ENCODE measurements at regions of chr19 and their contacts with region 1.

Region 1: GRCh38 chr19:4638828-4639530 is at the start of gene TNFAIP8L1:
- DNase-seq: peak; percentile 97 to 100 (median 99)
- ATAC-seq: peak; percentile 94
- H3K4me3 ChIP-seq: peak within 1 kb of the TSS; percentile 83 to 94
- H3K4me3 Mint-ChIP-seq: peak within 1 kb of the TSS; percentile 94
- H3K27ac ChIP-seq: peak within 1 kb of the TSS; percentile 68 to 96
- H3K27ac Mint-ChIP-seq: peak within 1 kb of the TSS; percentile 95
- H3K4me1 ChIP-seq: peaks cover 45% of the 10 kb centered on the region
- H3K4me1 Mint-ChIP-seq: peaks cover 34% of the 10 kb centered on the region
- H3K27me3 ChIP-seq: no peaks in the 10 kb centered on the region
- H3K27me3 Mint-ChIP-seq: no peaks in the 10 kb centered on the region
- CTCF ChIP-seq: no peak
- total RNA-seq, gene TNFAIP8L1: 4.3 to 4.5 TPM

Region 2: DNA sequence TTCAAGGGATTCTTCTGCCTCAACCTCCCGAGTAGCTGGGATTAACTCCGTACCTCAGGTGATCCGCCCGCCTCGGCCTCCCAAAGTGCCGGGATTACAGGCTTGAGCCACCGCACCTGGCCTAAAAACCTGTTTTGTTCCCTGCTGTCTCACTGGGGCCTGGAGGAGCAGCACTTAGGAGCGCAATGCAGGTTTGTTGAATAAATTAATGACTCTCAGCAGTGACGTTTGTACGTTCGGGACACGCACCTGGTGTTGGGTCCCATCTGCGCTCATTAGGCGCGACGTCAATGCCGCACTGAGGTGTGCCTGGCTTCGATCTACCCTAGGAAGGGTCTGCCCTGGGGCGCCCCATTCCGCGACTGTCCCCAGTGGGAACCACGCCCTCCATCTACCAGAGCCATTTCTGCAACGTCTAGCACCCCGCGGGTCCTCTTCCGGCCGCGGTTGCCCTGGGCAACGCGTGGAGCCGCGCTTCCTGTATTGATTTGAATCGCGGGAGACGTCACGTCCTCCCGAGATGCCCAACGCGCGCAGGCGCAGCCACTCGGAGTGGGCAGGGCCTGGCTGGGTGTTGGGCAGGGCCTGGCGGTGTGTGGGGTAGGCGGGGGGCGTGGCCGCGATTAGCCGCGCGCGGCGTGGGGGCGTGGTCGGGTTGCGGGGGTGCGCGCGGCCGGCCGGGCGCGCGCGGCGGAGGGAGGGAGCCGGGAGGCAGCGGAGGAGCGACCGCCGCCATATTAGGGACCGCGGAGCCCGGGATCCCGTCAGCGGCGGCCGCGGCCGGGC is 1133.2 kb before region 1 on chr19 and contains the start of gene FZR1:
- CTCF ChIA-PET with region 1: no interaction called
- POLR2A ChIA-PET with region 1: no interaction called
- intact Hi-C with region 1: loop called in 1 of 2 experiments (anchors 10 kb)
- DNase-seq: peak; percentile 99 to 100 (median 100)
- ATAC-seq: peak; percentile 85
- H3K4me3 ChIP-seq: peak within 1 kb of the TSS; percentile 76 to 83
- H3K4me3 Mint-ChIP-seq: peak within 1 kb of the TSS; percentile 85
- H3K27ac ChIP-seq: peak within 1 kb of the TSS; percentile 97
- H3K27ac Mint-ChIP-seq: peak within 1 kb of the TSS; percentile 97
- H3K4me1 ChIP-seq: peaks cover 36% of the 10 kb centered on the region
- H3K4me1 Mint-ChIP-seq: peaks cover 48% of the 10 kb centered on the region
- H3K27me3 ChIP-seq: no peaks in the 10 kb centered on the region
- H3K27me3 Mint-ChIP-seq: no peaks in the 10 kb centered on the region
- CTCF ChIP-seq: no peak
- total RNA-seq, gene FZR1: 130 to 142 TPM

Region 3: GRCh38 chr19:4471403-4472173 is 167.4 kb before region 1 on chr19:
- CTCF ChIA-PET with region 1: no interaction called
- POLR2A ChIA-PET with region 1: no interaction called
- intact Hi-C with region 1: loop called (anchors 1 to 5 kb)
- DNase-seq: peak; percentile 94 to 100 (median 97)
- ATAC-seq: peak; percentile 85
- H3K4me3 ChIP-seq: peak overlapping the region; percentile 55 to 63
- H3K4me3 Mint-ChIP-seq: no peak overlapping the region
- H3K27ac ChIP-seq: peak overlapping the region; percentile 70 to 72
- H3K27ac Mint-ChIP-seq: no peak overlapping the region
- H3K4me1 ChIP-seq: peaks cover 20% of the 10 kb centered on the region
- H3K4me1 Mint-ChIP-seq: peaks cover 22% of the 10 kb centered on the region
- H3K27me3 ChIP-seq: no peaks in the 10 kb centered on the region
- H3K27me3 Mint-ChIP-seq: no peaks in the 10 kb centered on the region
- CTCF ChIP-seq: no peak

Region 4: GRCh38 chr19:4531562-4532165 is 107.3 kb before region 1 on chr19:
- CTCF ChIA-PET with region 1: no interaction called
- POLR2A ChIA-PET with region 1: no interaction called
- intact Hi-C with region 1: no loop called
- DNase-seq: no peak
- ATAC-seq: no peak
- H3K4me3 ChIP-seq: no peak overlapping the region
- H3K4me3 Mint-ChIP-seq: no peak overlapping the region
- H3K27ac ChIP-seq: no peak overlapping the region
- H3K27ac Mint-ChIP-seq: no peak overlapping the region
- H3K4me1 ChIP-seq: peaks cover 11% of the 10 kb centered on the region
- H3K4me1 Mint-ChIP-seq: peaks cover 7% of the 10 kb centered on the region
- H3K27me3 ChIP-seq: no peaks in the 10 kb centered on the region
- H3K27me3 Mint-ChIP-seq: peaks cover 6% of the 10 kb centered on the region
- CTCF ChIP-seq: no peak

Region 5: GRCh38 chr19:4567584-4568071 is 71.4 kb before region 1 on chr19:
- CTCF ChIA-PET with region 1: interaction called, 75 read pairs
- POLR2A ChIA-PET with region 1: no interaction called
- intact Hi-C with region 1: loop called (anchors 1 to 2 kb)
- DNase-seq: peak; percentile 43 to 73 (median 61)
- ATAC-seq: peak; percentile 77
- H3K4me3 ChIP-seq: no peak overlapping the region
- H3K4me3 Mint-ChIP-seq: no peak overlapping the region
- H3K27ac ChIP-seq: no peak overlapping the region
- H3K27ac Mint-ChIP-seq: no peak overlapping the region
- H3K4me1 ChIP-seq: no peaks in the 10 kb centered on the region
- H3K4me1 Mint-ChIP-seq: no peaks in the 10 kb centered on the region
- H3K27me3 ChIP-seq: no peaks in the 10 kb centered on the region
- H3K27me3 Mint-ChIP-seq: peaks cover 7% of the 10 kb centered on the region
- CTCF ChIP-seq: peak; percentile 62

Region 6: GRCh38 chr19:4597975-4598671 is 40.9 kb before region 1 on chr19:
- CTCF ChIA-PET with region 1: interaction called, 5 read pairs
- POLR2A ChIA-PET with region 1: no interaction called
- intact Hi-C with region 1: loop called in 1 of 2 experiments (anchors 5 kb)
- DNase-seq: peak in 8 of 9 experiments; percentile 20 to 78 (median 46)
- ATAC-seq: peak; percentile 85
- H3K4me3 ChIP-seq: no peak overlapping the region
- H3K4me3 Mint-ChIP-seq: peak overlapping the region; percentile 70
- H3K27ac ChIP-seq: no peak overlapping the region
- H3K27ac Mint-ChIP-seq: no peak overlapping the region
- H3K4me1 ChIP-seq: peaks cover 12% of the 10 kb centered on the region
- H3K4me1 Mint-ChIP-seq: peaks cover 13% of the 10 kb centered on the region
- H3K27me3 ChIP-seq: peaks cover 19 to 38% of the 10 kb centered on the region in 2 experiments
- H3K27me3 Mint-ChIP-seq: peaks cover 41% of the 10 kb centered on the region
- CTCF ChIP-seq: no peak

Region 7: GRCh38 chr19:4877753-4878490 is 238.9 kb after region 1 on chr19:
- CTCF ChIA-PET with region 1: no interaction called
- POLR2A ChIA-PET with region 1: no interaction called
- intact Hi-C with region 1: no loop called
- DNase-seq: no peak
- ATAC-seq: no peak
- H3K4me3 ChIP-seq: peak overlapping the region in 1 of 2 experiments; percentile 11
- H3K4me3 Mint-ChIP-seq: no peak overlapping the region
- H3K27ac ChIP-seq: no peak overlapping the region
- H3K27ac Mint-ChIP-seq: no peak overlapping the region
- H3K4me1 ChIP-seq: peaks cover 17% of the 10 kb centered on the region
- H3K4me1 Mint-ChIP-seq: peaks cover 16% of the 10 kb centered on the region
- H3K27me3 ChIP-seq: no peaks in the 10 kb centered on the region
- H3K27me3 Mint-ChIP-seq: no peaks in the 10 kb centered on the region
- CTCF ChIP-seq: no peak

Region 8: DNA sequence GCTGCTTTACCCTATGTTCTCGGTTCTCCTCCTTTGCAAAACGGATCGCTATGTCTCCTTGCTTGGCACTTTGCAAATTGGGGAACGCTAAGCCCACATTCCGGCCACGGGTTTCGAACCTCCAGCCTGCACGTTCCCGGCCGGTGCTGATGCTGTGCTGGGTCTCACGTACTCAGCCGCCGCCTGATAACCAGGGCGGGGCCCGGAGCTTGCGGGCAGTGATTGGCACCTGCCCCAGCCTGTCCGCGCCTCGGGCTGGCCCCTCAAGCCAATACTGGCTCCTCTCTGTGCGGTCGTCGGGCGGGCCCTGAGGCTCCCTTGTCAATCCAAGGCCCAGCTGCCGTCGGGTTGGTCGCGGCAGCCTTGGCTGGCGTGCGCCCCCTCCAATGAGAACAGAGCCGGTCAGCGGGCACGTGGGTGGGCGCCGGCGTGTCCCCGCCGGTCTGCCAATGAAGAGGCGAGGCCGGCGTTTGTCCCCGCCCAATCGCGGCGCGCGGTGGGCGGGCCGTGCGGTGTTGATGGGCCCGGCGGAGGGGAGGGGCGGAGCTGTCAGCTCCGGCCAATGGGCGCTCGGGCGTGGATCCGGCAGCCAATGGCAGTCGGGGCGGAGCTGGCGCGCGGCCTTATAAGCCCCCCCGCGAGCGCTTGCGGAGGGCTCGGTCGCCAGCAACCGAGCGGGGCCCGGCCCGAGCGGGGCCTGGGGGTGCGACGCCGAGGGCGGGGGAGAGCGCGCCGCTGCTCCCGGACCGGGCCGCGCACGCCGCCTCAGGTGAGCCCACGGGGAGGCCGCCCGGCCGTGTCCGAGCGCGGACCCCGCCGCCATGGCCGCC is 329.7 kb after region 1 on chr19 and contains the start of gene KDM4B:
- CTCF ChIA-PET with region 1: no interaction called
- POLR2A ChIA-PET with region 1: no interaction called
- intact Hi-C with region 1: loop called in 1 of 2 experiments (anchors 2 kb)
- DNase-seq: peak; percentile 96 to 100 (median 99)
- ATAC-seq: peak; percentile 87
- H3K4me3 ChIP-seq: peak within 1 kb of the TSS; percentile 54 to 57
- H3K4me3 Mint-ChIP-seq: peak within 1 kb of the TSS; percentile 87
- H3K27ac ChIP-seq: peak within 1 kb of the TSS; percentile 33 to 60
- H3K27ac Mint-ChIP-seq: peak within 1 kb of the TSS; percentile 81
- H3K4me1 ChIP-seq: peaks cover 30% of the 10 kb centered on the region
- H3K4me1 Mint-ChIP-seq: peaks cover 30% of the 10 kb centered on the region
- H3K27me3 ChIP-seq: no peaks in the 10 kb centered on the region
- H3K27me3 Mint-ChIP-seq: no peaks in the 10 kb centered on the region
- CTCF ChIP-seq: no peak
- total RNA-seq, gene KDM4B: 111 to 121 TPM

Measured in CD8-positive, alpha-beta T cell (primary cell).